Activated CD8-positive, alpha-beta T cell treated with anti-CD3 and anti-CD28 coated beads, Interleukin-2, amount 10 ng/mL, durations not matched to agents 7 days and 5 days (primary cell): ENCODE measurements at regions of chr10 and their contacts with region 1.

Region 1: GRCh38 chr10:68223535-68224165 is 8.3 kb downstream of the ATOH7 start:
- DNase-seq: no peak
- ATAC-seq: no peak
- H3K4me3 Mint-ChIP-seq: no peak overlapping the region
- H3K27ac Mint-ChIP-seq: no peak overlapping the region
- H3K4me1 Mint-ChIP-seq: no peaks in the 10 kb centered on the region
- H3K27me3 Mint-ChIP-seq: peaks cover 12% of the 10 kb centered on the region

Region 2: DNA sequence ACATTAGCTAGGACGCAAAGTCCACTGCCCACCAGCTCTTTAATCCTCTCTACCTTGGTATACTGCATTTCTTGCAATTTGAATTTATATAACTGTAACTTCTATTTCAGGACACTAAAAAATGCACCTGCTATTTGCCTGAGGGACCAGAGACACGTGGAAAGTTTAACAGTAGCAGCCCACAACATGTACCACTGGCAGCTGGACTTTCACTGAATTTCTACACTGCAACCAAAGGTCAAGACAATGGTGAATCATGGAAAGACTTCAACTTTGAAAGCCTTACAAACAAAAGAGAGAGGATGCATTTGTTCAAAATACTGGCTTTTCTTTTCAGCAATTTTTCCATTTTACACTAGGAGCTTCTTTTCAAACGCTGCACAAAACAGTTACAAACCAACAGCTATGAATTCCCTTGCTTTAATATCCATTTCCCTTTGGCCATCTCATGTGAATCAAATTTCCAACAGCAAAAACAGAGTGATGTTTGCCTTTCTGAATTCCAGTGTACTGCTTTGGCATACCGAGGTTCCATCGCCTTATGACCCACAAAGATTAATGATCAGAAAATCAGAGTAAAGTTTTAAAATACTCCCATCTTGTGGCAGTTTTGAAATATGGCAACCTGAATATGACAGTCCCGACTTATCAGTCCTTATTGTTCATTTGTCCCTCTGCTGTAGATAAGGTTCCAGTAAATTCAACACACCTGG is 78.3 kb after region 1 on chr10:
- CTCF ChIA-PET with region 1: interaction called, 11 read pairs
- POLR2A ChIA-PET with region 1: no interaction called
- DNase-seq: no peak
- ATAC-seq: peak; percentile 49
- H3K4me3 Mint-ChIP-seq: no peak overlapping the region
- H3K27ac Mint-ChIP-seq: no peak overlapping the region
- H3K4me1 Mint-ChIP-seq: no peaks in the 10 kb centered on the region
- H3K27me3 Mint-ChIP-seq: no peaks in the 10 kb centered on the region